ENCODE measurements at regions of chr15 and their contacts with region 1.

Region 1: DNA sequence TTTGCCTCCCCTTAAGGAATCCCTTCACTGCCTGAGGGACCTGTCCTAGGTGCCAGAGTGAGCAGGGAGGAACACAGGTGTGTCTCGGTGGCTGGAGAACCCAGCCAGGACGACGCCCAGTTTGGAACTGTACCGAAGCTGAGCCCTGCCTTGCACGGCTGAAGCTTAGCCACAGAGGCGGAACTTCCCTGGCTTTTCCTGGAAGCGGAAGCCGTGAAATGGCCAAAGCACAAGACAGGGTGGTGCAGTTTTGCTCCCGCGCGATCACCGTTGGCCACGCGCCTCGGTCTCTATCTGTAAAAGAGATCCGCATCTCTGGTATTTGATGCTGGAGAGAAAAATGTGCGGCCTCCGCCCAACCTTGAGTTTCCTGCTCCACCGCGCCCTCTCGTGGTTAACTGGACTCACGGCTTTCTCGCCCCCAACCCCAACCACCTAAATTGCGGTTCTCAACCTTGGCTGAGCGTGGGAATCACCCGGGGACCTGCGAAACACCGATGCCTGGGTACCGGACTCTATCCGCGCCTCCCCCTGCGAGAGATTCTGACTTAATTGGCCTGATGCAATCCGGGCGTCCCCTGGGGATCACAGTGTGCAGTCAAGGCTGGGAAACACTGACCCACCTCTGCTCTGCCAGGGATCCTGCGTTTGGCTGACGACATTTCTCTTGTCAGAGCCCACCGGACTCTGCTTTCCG is 70.7 kb upstream of the ABHD2 start:
- DNase-seq: peak; percentile 50 to 70
- ATAC-seq: peak; percentile 66 to 70
- H3K4me3 ChIP-seq: peak overlapping the region; percentile 15 to 46 (median 34)
- H3K27ac ChIP-seq: peak overlapping the region; percentile 56 to 80 (median 64)
- H3K4me1 ChIP-seq: peaks cover 16 to 28% of the 10 kb centered on the region in 2 donors
- H3K27me3 ChIP-seq: no peaks in the 10 kb centered on the region
- CTCF ChIP-seq: peak; percentile 70 to 88 (median 87)
- POLR2A ChIP-seq: no peak

Region 2: DNA sequence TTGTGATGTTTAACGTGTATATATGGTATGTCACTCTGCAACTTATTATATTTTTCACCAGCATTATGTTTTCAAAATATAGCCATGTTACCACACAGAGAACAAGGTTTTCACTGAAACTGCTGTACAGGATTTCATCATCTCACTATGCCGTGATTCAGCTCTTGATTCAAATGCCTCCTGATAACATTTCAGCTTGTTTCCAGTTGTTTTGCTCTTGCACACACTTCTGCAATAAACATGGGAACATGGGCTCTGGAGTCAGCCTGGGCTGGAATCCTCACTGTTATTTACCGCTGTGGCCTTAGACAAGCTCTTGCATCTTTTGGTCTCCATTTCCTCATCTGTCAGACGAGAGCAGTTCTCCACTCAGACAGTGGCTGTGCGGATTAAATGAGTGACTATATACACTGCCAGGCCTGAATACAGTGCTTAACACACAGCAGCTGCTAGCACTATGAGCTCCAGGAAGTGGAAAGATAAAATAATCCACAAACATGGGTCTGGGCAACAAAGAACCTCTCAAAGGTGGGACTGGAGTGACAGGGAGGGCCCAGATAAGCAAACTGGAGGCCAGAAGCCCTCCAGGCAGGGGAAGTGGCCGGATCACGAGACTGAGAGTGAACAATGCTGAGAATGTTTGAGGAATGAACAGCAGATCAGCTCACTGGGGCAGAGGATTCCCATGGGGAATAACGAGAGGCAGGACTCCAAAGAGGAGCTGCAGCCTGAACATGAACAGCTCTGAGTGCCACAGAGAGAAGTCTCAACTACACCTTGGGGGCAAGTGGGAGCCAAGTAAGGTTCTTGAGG is 778.7 kb before region 1 on chr15:
- in situ Hi-C with region 1: no loop called
- intact Hi-C with region 1: no loop called
- DNase-seq: no peak
- ATAC-seq: no peak
- H3K4me3 ChIP-seq: no peak overlapping the region
- H3K27ac ChIP-seq: no peak overlapping the region
- H3K4me1 ChIP-seq: no peaks in the 10 kb centered on the region
- H3K27me3 ChIP-seq: no peaks in the 10 kb centered on the region
- CTCF ChIP-seq: no peak
- POLR2A ChIP-seq: no peak

Region 3: GRCh38 chr15:88904624-88905327 is 112.7 kb before region 1 on chr15:
- in situ Hi-C with region 1: loop called (anchors 5 to 10 kb)
- intact Hi-C with region 1: loop called (anchors 2 kb)
- DNase-seq: peak; percentile 66 to 75
- ATAC-seq: peak; percentile 65 to 69
- H3K4me3 ChIP-seq: no peak overlapping the region
- H3K27ac ChIP-seq: peak overlapping the region; percentile 76 to 99 (median 94)
- H3K4me1 ChIP-seq: peaks cover 50 to 55% of the 10 kb centered on the region in 2 donors
- H3K27me3 ChIP-seq: no peaks in the 10 kb centered on the region
- CTCF ChIP-seq: peak; percentile 94 to 99 (median 97)
- POLR2A ChIP-seq: no peak